ENCODE measurements at regions of chr13 and their contacts with region 1.

Region 1: GRCh38 chr13:51286135-51287002 is 53.1 kb upstream of the SERPINE3 start:
- DNase-seq: peak; percentile 76
- CTCF ChIP-seq: peak; percentile 93

Region 2: DNA sequence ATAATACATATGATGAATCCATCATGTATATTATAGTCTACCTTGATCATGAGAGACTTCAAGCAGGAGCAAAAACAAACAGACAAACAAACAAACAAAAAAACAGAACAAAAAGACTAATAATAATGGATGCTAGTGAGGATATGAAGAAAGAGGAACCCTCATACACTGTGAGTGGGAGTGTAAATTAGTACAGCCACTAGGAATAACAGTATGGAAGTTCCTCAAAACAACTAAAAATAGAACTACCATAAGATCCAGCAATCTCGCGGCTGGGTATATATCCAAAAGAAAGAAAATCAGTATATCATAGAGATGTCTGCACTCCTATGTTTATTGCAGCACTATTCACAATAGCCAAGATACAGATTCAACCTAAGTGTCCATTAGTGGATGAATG is 435.9 kb before region 1 on chr13:
- CTCF ChIA-PET with region 1: no interaction called
- POLR2A ChIA-PET with region 1: no interaction called
- DNase-seq: no peak
- CTCF ChIP-seq: no peak

Region 3: GRCh38 chr13:51125498-51126226 is 160.7 kb before region 1 on chr13:
- CTCF ChIA-PET with region 1: interaction called, 187 read pairs
- POLR2A ChIA-PET with region 1: no interaction called
- DNase-seq: peak; percentile 54
- CTCF ChIP-seq: peak; percentile 78

Region 4: GRCh38 chr13:51148223-51148951 is 138.0 kb before region 1 on chr13:
- CTCF ChIA-PET with region 1: interaction called, 11 read pairs
- POLR2A ChIA-PET with region 1: no interaction called
- DNase-seq: no peak
- CTCF ChIP-seq: no peak

Region 5: GRCh38 chr13:51249770-51250741 is 36.3 kb before region 1 on chr13:
- CTCF ChIA-PET with region 1: interaction called, 16 read pairs
- POLR2A ChIA-PET with region 1: no interaction called
- DNase-seq: peak; percentile 41
- CTCF ChIP-seq: peak; percentile 7

Region 6: GRCh38 chr13:51271528-51272085 is 14.8 kb before region 1 on chr13:
- CTCF ChIA-PET with region 1: interaction called, 42 read pairs
- POLR2A ChIA-PET with region 1: no interaction called
- DNase-seq: no peak
- CTCF ChIP-seq: no peak

Region 7: DNA sequence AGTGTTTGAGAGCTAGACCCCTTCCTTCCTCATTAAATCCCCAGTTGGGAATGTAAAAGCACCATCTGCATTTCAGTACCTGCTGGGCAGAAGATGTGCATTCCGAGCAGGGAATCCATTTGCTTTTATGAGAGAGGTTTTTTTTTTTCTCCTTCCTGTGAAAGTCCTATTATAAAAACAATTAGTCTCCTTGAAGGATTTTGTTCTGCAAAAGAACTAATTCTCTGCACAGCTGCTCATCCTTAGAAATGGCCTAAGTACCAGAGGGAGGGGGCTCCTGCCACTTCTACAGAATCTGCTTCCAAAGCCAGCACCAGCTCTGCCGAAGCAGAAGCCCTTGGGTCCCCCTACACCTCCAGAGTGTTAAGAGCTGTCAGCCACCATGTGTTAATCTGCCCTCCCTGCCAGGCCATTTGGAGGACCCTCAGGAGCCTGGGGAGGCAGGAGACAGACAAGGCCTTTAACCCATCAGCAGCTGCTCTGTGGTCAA is 16.7 kb after region 1 on chr13:
- CTCF ChIA-PET with region 1: interaction called, 64 read pairs
- POLR2A ChIA-PET with region 1: no interaction called
- DNase-seq: no peak
- CTCF ChIP-seq: no peak

Region 8: GRCh38 chr13:51330791-51331190 is 44.4 kb after region 1 on chr13:
- CTCF ChIA-PET with region 1: interaction called, 17 read pairs
- POLR2A ChIA-PET with region 1: no interaction called
- DNase-seq: peak; percentile 41
- CTCF ChIP-seq: no peak

Region 9: DNA sequence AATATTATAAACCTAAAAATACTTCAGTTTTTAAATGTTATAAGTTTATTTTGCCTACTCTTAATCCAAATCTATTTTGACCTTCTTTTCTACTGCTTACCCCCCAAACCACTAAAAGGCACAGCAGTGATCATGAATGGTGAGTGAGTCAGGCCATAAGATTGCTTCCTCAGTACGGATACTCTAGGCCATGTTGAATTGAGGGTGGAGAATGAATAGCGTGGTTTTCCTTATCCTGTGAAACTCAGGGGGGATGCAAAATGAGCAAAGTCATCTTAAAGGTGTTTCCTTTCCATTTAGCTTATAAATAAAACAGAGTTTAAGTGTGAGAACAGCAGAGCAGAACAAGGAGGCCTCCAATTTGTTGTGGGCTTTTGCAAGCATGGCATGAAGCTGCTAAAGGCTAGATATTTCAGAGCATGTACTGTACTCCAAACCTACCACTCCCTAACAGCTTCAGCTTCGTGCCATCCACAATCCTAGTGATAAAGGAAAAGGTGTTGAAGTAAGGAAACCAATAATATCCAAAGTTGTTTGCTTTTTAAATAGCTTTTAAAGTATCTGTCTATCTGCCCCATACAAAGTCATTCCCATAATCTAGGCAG is 78.1 kb after region 1 on chr13:
- CTCF ChIA-PET with region 1: no interaction called
- POLR2A ChIA-PET with region 1: no interaction called
- DNase-seq: no peak
- CTCF ChIP-seq: no peak

Measured in GM10248 (cell line).